Left cardiac atrium (tissue), 4 donors: ENCODE measurements at regions of chr3 and their contacts with region 1.

Region 1: GRCh38 chr3:88203642-88204055 is 53.9 kb downstream of the C3orf38 start:
- DNase-seq: peak; percentile 59
- ATAC-seq: peak; percentile 86 to 90

Region 2: DNA sequence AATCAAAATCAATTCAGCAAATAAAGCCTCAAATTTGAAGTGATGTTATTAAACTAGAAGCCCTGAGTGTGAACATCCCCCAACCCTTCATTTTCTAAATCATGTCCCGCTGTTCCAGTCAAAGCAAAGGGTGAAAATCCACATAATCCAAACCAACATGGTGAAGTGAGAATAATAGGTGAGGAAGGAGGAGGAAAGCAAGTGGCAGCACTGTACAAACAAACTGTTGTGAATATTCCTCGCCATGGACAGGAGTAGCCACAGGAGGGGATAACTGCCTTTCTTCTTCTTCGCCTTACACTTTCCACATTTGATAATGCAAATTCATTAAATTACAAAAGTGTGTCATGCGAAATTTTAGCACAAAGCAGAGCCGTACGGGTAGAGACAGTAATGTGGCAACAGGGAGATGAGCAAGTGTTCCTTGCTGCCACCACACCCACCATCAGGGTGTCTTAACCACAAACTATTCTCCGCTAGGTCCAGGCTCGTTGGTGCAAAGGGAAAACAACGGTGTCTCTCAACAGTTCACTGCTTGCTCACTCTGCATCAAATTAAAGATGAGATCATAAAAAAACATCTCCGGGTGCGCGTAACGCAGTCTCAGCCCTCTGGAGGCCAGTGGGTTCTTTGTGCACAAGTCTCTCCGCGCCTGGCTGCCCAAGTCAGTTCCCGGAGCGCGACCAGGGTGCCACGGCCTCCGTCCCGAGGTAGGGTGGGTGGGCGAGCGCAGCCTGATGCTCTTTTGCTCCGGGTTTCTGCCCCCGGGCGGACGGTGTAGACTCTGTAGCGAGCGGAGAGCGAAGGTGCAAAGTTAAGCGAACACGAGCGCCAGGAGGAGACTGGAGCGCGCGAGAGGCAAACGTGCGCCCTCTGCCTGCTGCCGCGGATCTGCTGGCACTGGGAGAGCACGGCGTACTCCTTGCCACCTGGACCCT is 910.5 kb after region 1 on chr3:
- intact Hi-C with region 1: loop called in 1 of 2 experiments (anchors 10 kb)
- DNase-seq: peak; percentile 67
- ATAC-seq: peak; percentile 94 to 96

Region 3: GRCh38 chr3:90184861-90185260 is 1981.2 kb after region 1 on chr3:
- intact Hi-C with region 1: loop called in 1 of 2 experiments (anchors 10 kb)
- DNase-seq: no peak
- ATAC-seq: no peak